ENCODE measurements at regions of chr17 and their contacts with region 1.

Region 1: GRCh38 chr17:29148790-29149430 is 31.3 kb downstream of the MYO18A start:
- DNase-seq: peak; percentile 93 to 96
- ATAC-seq: peak; percentile 94 to 97 (median 96)
- H3K4me3 ChIP-seq: peak overlapping the region in 9 of 10 donors; percentile 21 to 65 (median 59)
- H3K27ac ChIP-seq: peak overlapping the region; percentile 14 to 89 (median 78)
- H3K4me1 ChIP-seq: peaks cover 7 to 73% (median 47%) of the 10 kb centered on the region in 9 donors
- H3K27me3 ChIP-seq: no peaks in the 10 kb centered on the region
- CTCF ChIP-seq: peak; percentile 94 to 100 (median 99)

Region 2: GRCh38 chr17:29004081-29004692 is 144.7 kb before region 1 on chr17:
- intact Hi-C with region 1: no loop called
- DNase-seq: no peak
- ATAC-seq: peak in 3 of 8 donors; percentile 29 to 49 (median 35)
- H3K4me3 ChIP-seq: no peak overlapping the region
- H3K27ac ChIP-seq: no peak overlapping the region
- H3K4me1 ChIP-seq: peaks cover 0 to 8% (median 0%) of the 10 kb centered on the region in 9 donors
- H3K27me3 ChIP-seq: peaks cover 4 to 62% (median 55%) of the 10 kb centered on the region in 7 donors
- CTCF ChIP-seq: no peak

Region 3: GRCh38 chr17:29124117-29124924 is 24.6 kb before region 1 on chr17:
- intact Hi-C with region 1: loop called in 2 of 10 experiments (anchors 2 kb)
- DNase-seq: peak in 1 of 2 donors; percentile 71
- ATAC-seq: peak; percentile 47 to 85 (median 78)
- H3K4me3 ChIP-seq: no peak overlapping the region
- H3K27ac ChIP-seq: peak overlapping the region in 7 of 10 donors; percentile 0 to 58 (median 47)
- H3K4me1 ChIP-seq: peaks cover 25 to 51% (median 38%) of the 10 kb centered on the region in 9 donors
- H3K27me3 ChIP-seq: no peaks in the 10 kb centered on the region
- CTCF ChIP-seq: peak; percentile 42 to 81 (median 70)

Region 4: GRCh38 chr17:29219378-29220047 is 70.6 kb after region 1 on chr17:
- intact Hi-C with region 1: loop called (anchors 1 to 5 kb)
- DNase-seq: peak; percentile 56 to 83
- ATAC-seq: peak; percentile 87 to 96 (median 91)
- H3K4me3 ChIP-seq: no peak overlapping the region
- H3K27ac ChIP-seq: no peak overlapping the region
- H3K4me1 ChIP-seq: peaks cover 0 to 11% (median 8%) of the 10 kb centered on the region in 9 donors
- H3K27me3 ChIP-seq: no peaks in the 10 kb centered on the region
- CTCF ChIP-seq: peak; percentile 88 to 97 (median 92)

Region 5: GRCh38 chr17:29293890-29294579 is 145.1 kb after region 1 on chr17 and contains the start of gene NUFIP2:
- intact Hi-C with region 1: loop called in 8 of 10 experiments (anchors 1 to 10 kb)
- DNase-seq: peak; percentile 99
- ATAC-seq: peak; percentile 94 to 98 (median 97)
- H3K4me3 ChIP-seq: peak within 1 kb of the TSS; percentile 73 to 99 (median 95)
- H3K27ac ChIP-seq: peak within 1 kb of the TSS; percentile 90 to 100 (median 99)
- H3K4me1 ChIP-seq: peaks cover 15 to 42% (median 35%) of the 10 kb centered on the region in 9 donors
- H3K27me3 ChIP-seq: no peaks in the 10 kb centered on the region
- CTCF ChIP-seq: peak in 3 of 9 donors; percentile 27 to 45 (median 28)
- total RNA-seq, gene NUFIP2: 32.1 to 58.3 (median 39.6) TPM

Region 6: DNA sequence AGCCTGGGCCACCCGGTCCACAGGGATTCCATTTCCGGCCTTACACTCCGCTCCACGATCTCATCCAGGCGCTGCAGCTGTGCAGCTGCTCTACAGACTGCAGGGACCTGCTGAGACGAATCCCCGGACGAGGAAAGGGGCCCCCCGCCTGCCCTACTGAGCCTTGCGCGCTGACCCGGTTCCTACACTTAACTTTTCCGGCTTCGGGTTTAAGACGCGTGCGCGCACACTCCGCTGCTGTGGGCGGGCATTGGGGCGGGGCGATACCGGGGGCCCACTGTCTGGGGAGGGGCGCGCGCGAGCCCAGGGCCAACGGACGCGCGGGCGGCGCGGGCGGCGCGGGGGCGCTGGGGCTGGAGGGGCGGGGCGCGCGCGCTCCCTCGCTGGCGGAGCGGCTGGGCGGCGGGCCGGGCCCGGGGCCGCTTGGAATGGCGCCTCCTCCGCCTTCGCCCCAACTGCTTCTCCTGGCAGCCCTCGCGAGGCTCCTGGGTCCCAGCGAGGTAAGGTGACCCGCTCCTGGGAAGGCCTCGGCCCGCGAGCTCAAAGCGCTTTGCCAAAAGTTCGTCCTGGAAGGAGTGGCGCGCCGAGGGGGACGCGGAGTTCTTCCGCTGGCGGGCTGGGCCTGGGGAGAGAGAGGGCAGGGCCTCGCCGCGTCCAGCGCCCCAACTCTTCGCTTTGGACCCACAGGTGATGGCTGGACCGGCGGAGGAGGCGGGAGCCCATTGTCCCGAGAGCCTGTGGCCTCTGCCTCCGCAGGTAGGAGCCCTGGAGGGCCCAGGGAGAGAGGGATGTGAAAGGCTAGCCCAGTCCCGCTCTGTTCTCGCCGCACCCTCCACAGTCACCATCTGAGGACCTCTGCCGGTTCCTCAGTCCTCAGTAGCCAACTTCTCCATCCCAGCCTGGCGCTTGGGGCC is 419.7 kb after region 1 on chr17 and contains the start of gene TP53I13:
- intact Hi-C with region 1: loop called in 1 of 10 experiments (anchors 10 kb)
- DNase-seq: peak; percentile 87 to 89
- ATAC-seq: peak; percentile 61 to 82 (median 74)
- H3K4me3 ChIP-seq: peak within 1 kb of the TSS; percentile 68 to 92 (median 84)
- H3K27ac ChIP-seq: peak within 1 kb of the TSS; percentile 83 to 94 (median 91)
- H3K4me1 ChIP-seq: peaks cover 14 to 68% (median 52%) of the 10 kb centered on the region in 9 donors
- H3K27me3 ChIP-seq: no peaks in the 10 kb centered on the region
- CTCF ChIP-seq: no peak
- total RNA-seq, gene TP53I13: 24.0 to 41.6 (median 30.2) TPM

Measured in heart right ventricle (tissue), 16 donors.